Esophagus muscularis mucosa (tissue), 4 donors: ENCODE measurements at regions of chr3 and their contacts with region 1.

Region 1: DNA sequence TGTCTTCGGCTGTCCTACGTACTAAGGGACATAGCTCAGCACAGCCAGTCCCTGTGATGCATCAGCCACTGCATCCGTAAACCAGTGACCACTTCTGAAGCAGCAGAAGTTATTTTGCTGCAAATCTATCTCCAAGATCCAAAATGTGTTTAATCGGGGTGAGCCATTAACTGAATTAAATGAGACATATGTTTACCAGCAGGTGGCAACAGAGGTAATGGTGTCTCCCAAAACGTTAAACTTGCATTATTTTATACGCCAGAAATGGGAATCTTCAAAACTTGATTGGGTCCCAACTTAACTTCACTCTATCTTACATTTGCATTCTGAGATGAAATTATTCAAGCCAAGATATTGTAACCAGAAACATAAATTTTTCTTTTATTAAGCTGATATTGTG is 75.3 kb upstream of the BOC start:
- DNase-seq: no peak
- H3K4me3 ChIP-seq: no peak overlapping the region
- H3K27ac ChIP-seq: peak overlapping the region; percentile 29 to 60 (median 40)
- H3K4me1 ChIP-seq: peaks cover 0 to 45% (median 32%) of the 10 kb centered on the region in 4 donors
- H3K27me3 ChIP-seq: no peaks in the 10 kb centered on the region
- CTCF ChIP-seq: peak; percentile 62 to 66 (median 64)
- EP300 ChIP-seq: no peak
- POLR2A ChIP-seq: no peak

Region 2: DNA sequence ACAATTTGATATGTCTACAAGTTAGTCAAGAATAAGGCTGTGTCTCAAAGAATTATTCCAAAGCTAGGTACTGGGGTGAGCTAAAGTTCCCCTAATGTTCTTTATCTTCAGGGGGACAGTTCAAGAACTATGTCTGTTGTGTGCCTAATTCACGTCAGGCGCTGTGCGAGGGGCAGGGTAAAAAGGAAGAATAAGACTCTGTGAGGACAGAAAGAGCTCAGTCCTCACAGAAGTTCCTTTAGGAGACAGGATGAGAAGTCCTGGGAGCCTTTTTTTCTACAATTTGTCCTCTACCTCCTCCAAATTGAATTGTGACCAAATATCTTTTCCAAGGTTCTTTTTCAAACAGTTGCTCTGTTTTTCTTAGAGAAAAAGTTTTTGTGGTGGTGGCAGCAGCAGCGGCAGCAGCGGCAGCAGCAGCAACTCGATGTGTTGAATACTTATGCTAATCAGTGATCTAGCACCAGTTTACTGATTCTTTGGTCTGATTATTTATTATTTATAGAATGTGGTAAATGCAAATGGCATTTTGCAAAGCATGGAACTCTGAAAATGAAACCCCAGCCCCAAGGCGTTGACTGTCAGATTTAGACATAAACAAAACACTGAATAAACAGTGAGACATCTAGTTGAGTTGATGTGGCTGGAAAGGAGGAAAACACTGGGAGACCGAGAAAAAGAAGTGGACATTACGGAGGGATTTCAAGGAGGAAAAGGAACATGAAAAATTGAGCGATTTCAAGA is 56.7 kb before region 1 on chr3:
- intact Hi-C with region 1: no loop called
- DNase-seq: no peak
- H3K4me3 ChIP-seq: peak overlapping the region in 3 of 4 donors; percentile 0 to 22 (median 9)
- H3K27ac ChIP-seq: peak overlapping the region; percentile 34 to 50 (median 44)
- H3K4me1 ChIP-seq: peaks cover 0 to 7% (median 5%) of the 10 kb centered on the region in 4 donors
- H3K27me3 ChIP-seq: no peaks in the 10 kb centered on the region
- CTCF ChIP-seq: no peak
- EP300 ChIP-seq: no peak
- POLR2A ChIP-seq: no peak

Region 3: DNA sequence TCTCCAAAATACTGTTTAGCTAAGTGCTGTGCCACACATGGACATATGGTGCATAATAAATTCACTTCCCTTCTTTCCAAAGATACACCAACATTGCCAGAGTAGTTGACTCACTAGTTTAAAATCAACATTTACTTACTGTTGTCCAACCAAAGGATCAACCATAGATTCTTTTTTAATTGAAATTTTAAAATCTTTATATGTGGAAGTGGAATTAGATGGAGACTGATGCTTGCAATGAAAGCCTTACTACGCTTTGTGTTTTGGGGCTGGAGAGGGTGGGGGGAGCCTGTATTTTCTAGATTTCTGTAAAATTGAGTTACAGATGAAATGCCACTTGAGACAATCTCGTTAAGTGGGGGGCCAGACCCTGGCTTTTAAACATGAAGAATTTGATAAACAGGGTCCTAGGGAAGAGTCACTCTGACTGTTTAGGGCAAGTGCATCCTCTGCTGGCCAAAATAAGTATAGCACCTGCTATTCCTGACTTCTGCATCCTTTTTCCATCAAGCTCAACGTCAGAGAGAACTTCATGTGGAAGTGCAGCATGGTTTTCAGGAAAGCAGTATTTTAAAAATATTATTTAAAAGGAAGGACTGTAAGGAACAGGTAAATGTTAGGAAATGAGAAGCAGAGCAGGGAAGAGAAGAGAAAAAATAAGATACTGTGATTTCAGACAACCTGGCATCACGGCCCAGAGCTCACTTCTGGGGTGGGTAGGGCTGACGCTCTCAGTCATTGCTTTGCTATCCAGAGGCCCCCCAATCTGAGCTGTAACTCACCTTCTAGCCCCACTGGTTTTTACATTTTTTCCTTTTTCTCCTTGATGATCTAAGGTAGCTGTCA is 152.0 kb after region 1 on chr3:
- intact Hi-C with region 1: loop called (anchors 2 kb)
- DNase-seq: no peak
- H3K4me3 ChIP-seq: no peak overlapping the region
- H3K27ac ChIP-seq: peak overlapping the region; percentile 65 to 79 (median 70)
- H3K4me1 ChIP-seq: peaks cover 3 to 52% (median 44%) of the 10 kb centered on the region in 4 donors
- H3K27me3 ChIP-seq: no peaks in the 10 kb centered on the region
- CTCF ChIP-seq: peak; percentile 99 to 100 (median 100)
- EP300 ChIP-seq: no peak
- POLR2A ChIP-seq: no peak

Region 4: DNA sequence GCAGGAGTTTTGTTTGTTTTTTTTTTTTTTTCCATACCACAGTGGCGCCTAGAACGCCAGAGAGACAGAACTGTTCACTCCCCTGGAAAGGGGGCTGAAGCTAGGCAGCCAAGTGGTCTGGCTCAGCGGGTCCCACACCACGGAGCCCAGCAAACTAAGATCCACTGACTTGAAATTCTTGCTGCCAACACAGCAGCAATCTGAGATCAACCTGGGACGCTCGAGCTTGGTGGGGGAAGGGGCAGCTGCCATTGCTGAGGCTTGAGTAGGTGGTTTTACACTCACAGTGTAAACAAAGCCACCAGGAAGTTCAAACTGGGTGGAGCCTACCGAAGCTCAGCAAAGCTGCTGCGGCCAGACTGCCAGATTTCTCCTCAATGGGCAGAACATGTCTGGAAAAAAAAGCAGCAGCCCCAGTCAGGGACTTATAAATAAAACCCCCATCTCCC is 349.1 kb after region 1 on chr3:
- intact Hi-C with region 1: no loop called
- DNase-seq: no peak
- H3K4me3 ChIP-seq: no peak overlapping the region
- H3K27ac ChIP-seq: no peak overlapping the region
- H3K4me1 ChIP-seq: no peaks in the 10 kb centered on the region
- H3K27me3 ChIP-seq: no peaks in the 10 kb centered on the region
- CTCF ChIP-seq: no peak
- EP300 ChIP-seq: no peak
- POLR2A ChIP-seq: no peak